ENCODE measurements at regions of chr20 and their contacts with region 1.

Region 1: DNA sequence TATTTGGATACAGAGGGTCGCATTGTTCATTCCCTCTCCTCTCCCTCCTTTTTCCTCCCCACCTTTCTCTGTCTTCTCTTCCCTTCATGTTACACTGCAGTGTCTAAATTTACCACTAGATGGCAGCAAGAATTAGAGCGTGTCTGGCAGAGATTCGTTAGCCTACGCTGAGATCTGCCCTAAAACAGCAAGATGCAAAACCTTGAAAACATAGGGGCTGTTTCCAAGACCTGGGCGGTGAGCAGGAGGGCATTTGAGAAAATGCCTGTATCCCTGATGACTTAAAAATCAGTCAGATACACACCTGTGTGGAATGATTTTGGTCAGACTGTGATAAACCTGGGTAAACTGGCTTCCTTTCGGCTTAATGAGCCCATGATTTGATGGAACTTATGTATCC is 101.5 kb upstream of the ISM1 start:
- DNase-seq: peak in 10 of 14 experiments; percentile 0 to 78 (median 21)
- ATAC-seq: peak; percentile 83
- H3K4me3 ChIP-seq: no peak overlapping the region
- H3K4me3 Mint-ChIP-seq: no peak overlapping the region
- H3K27ac ChIP-seq: no peak overlapping the region
- H3K27ac Mint-ChIP-seq: no peak overlapping the region
- H3K4me1 ChIP-seq: no peaks in the 10 kb centered on the region
- H3K4me1 Mint-ChIP-seq: no peaks in the 10 kb centered on the region
- H3K27me3 ChIP-seq: no peaks in the 10 kb centered on the region
- H3K27me3 Mint-ChIP-seq: no peaks in the 10 kb centered on the region
- CTCF ChIP-seq: peak; percentile 92

Region 2: DNA sequence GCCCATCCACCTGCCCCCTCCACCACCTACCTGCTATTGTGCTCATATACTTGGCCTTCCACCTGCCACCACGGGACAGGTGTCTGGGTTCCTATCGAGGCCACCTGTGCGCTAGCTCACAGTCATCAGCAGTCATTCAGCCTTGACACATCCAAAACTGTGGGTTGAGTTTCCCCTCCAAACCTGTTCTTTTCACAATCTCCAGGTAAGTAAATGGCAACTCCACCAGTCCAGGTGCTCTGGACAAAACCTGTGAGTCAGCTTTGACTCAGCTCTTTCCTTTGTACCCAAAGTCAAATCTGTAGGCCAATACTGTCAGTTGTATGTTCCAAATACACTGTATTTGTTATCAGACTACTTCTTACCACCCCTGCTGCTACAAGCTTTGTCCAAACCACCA is 58.2 kb before region 1 on chr20:
- CTCF ChIA-PET with region 1: no interaction called
- POLR2A ChIA-PET with region 1: no interaction called
- intact Hi-C with region 1: no loop called
- DNase-seq: no peak
- ATAC-seq: no peak
- H3K4me3 ChIP-seq: no peak overlapping the region
- H3K4me3 Mint-ChIP-seq: no peak overlapping the region
- H3K27ac ChIP-seq: no peak overlapping the region
- H3K27ac Mint-ChIP-seq: no peak overlapping the region
- H3K4me1 ChIP-seq: no peaks in the 10 kb centered on the region
- H3K4me1 Mint-ChIP-seq: no peaks in the 10 kb centered on the region
- H3K27me3 ChIP-seq: no peaks in the 10 kb centered on the region
- H3K27me3 Mint-ChIP-seq: no peaks in the 10 kb centered on the region
- CTCF ChIP-seq: no peak

Region 3: DNA sequence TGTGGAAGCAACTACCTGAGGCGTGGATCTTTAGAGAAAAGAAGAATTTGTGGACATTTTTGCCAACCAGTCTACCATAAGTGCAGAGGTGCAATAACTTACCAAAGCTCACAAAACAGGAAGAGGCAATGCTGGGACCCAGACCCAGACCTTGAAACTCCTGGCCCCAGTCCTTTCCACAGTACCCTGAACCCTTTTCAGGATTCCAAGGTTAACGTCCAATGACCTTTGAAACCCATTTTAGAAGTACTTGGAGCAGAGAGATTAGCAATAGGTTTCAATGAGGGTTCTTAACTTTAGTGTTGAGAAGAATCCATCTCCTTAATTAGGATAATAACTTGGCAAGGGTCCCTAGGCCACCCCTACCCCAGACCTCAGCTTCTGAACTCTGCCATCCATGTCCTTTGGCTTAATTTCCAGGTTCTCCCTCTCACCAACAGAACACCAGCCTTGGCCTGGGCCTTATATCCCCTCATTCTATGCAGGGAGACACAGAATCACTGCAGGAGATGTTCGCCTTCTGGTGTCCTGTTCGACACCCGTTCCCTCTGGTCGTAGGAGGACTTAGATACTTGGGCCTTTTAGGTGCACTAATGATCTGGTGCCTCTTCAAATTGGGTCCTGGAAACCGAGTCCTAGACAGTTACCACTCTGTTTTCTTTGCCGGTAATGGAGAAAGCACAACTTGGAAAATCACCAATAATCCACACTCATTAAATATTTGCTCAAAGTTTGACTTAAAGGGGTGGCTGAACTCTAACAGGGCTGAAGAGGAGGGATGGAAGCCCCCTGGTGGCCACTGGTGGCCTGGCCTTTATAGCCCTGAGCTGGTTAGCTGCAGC is 142.1 kb after region 1 on chr20:
- CTCF ChIA-PET with region 1: interaction called, 4 read pairs
- POLR2A ChIA-PET with region 1: interaction called, 4 read pairs
- intact Hi-C with region 1: loop called (anchors 1 kb)
- DNase-seq: peak; percentile 45 to 84 (median 67)
- ATAC-seq: peak; percentile 93
- H3K4me3 ChIP-seq: no peak overlapping the region
- H3K4me3 Mint-ChIP-seq: no peak overlapping the region
- H3K27ac ChIP-seq: no peak overlapping the region
- H3K27ac Mint-ChIP-seq: no peak overlapping the region
- H3K4me1 ChIP-seq: peaks cover 15% of the 10 kb centered on the region
- H3K4me1 Mint-ChIP-seq: peaks cover 39% of the 10 kb centered on the region
- H3K27me3 ChIP-seq: no peaks in the 10 kb centered on the region
- H3K27me3 Mint-ChIP-seq: no peaks in the 10 kb centered on the region
- CTCF ChIP-seq: peak; percentile 73

Region 4: GRCh38 chr20:13302647-13303450 is 183.3 kb after region 1 on chr20:
- CTCF ChIA-PET with region 1: interaction called, 10 read pairs
- POLR2A ChIA-PET with region 1: no interaction called
- intact Hi-C with region 1: loop called (anchors 1 kb)
- DNase-seq: peak; percentile 6 to 58 (median 30)
- ATAC-seq: peak; percentile 60
- H3K4me3 ChIP-seq: no peak overlapping the region
- H3K4me3 Mint-ChIP-seq: no peak overlapping the region
- H3K27ac ChIP-seq: no peak overlapping the region
- H3K27ac Mint-ChIP-seq: no peak overlapping the region
- H3K4me1 ChIP-seq: no peaks in the 10 kb centered on the region
- H3K4me1 Mint-ChIP-seq: no peaks in the 10 kb centered on the region
- H3K27me3 ChIP-seq: no peaks in the 10 kb centered on the region
- H3K27me3 Mint-ChIP-seq: no peaks in the 10 kb centered on the region
- CTCF ChIP-seq: peak; percentile 71

Region 5: GRCh38 chr20:13546497-13547131 is 427.0 kb after region 1 on chr20:
- CTCF ChIA-PET with region 1: interaction called, 5 read pairs
- POLR2A ChIA-PET with region 1: interaction called, 3 read pairs
- intact Hi-C with region 1: loop called (anchors 1 kb)
- DNase-seq: peak; percentile 36 to 73 (median 52)
- ATAC-seq: no peak
- H3K4me3 ChIP-seq: no peak overlapping the region
- H3K4me3 Mint-ChIP-seq: no peak overlapping the region
- H3K27ac ChIP-seq: no peak overlapping the region
- H3K27ac Mint-ChIP-seq: no peak overlapping the region
- H3K4me1 ChIP-seq: no peaks in the 10 kb centered on the region
- H3K4me1 Mint-ChIP-seq: no peaks in the 10 kb centered on the region
- H3K27me3 ChIP-seq: no peaks in the 10 kb centered on the region
- H3K27me3 Mint-ChIP-seq: no peaks in the 10 kb centered on the region
- CTCF ChIP-seq: peak; percentile 84

Region 6: DNA sequence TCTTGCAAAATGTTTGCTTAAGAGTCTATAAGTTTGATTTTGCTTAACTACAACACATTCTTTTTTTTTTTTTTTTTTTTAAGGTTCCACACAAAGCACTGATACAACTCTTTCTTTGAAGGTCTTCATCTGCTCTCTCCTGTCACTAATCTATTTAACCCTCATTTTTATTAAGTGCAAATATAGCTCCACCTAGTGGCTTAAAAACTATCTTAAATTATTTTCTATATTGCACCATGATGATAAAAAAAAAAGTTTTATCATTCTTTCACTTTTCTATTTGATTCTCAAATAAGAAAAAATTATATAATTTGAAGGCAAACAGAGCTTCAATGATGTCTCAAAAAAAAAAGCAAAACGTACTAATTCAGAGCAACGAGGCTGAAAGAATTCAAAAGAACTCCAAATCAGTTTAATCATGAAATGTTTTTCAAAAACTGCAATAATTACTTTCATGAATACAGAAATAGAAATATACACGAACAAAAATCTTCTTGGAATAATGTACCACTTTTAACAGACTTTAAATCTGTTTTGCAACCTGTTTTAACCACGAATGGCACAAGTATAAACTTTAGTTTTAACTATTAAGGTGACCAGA is 652.4 kb after region 1 on chr20:
- CTCF ChIA-PET with region 1: no interaction called
- POLR2A ChIA-PET with region 1: no interaction called
- intact Hi-C with region 1: loop called (anchors 2 to 5 kb)
- DNase-seq: peak in 3 of 14 experiments; percentile 14 to 38 (median 20)
- ATAC-seq: no peak
- H3K4me3 ChIP-seq: no peak overlapping the region
- H3K4me3 Mint-ChIP-seq: no peak overlapping the region
- H3K27ac ChIP-seq: no peak overlapping the region
- H3K27ac Mint-ChIP-seq: no peak overlapping the region
- H3K4me1 ChIP-seq: no peaks in the 10 kb centered on the region
- H3K4me1 Mint-ChIP-seq: peaks cover 9% of the 10 kb centered on the region
- H3K27me3 ChIP-seq: no peaks in the 10 kb centered on the region
- H3K27me3 Mint-ChIP-seq: no peaks in the 10 kb centered on the region
- CTCF ChIP-seq: peak; percentile 83

Measured in CD4-positive, alpha-beta T cell (primary cell).